ENCODE measurements at regions of chr22 and their contacts with region 1.

Region 1: DNA sequence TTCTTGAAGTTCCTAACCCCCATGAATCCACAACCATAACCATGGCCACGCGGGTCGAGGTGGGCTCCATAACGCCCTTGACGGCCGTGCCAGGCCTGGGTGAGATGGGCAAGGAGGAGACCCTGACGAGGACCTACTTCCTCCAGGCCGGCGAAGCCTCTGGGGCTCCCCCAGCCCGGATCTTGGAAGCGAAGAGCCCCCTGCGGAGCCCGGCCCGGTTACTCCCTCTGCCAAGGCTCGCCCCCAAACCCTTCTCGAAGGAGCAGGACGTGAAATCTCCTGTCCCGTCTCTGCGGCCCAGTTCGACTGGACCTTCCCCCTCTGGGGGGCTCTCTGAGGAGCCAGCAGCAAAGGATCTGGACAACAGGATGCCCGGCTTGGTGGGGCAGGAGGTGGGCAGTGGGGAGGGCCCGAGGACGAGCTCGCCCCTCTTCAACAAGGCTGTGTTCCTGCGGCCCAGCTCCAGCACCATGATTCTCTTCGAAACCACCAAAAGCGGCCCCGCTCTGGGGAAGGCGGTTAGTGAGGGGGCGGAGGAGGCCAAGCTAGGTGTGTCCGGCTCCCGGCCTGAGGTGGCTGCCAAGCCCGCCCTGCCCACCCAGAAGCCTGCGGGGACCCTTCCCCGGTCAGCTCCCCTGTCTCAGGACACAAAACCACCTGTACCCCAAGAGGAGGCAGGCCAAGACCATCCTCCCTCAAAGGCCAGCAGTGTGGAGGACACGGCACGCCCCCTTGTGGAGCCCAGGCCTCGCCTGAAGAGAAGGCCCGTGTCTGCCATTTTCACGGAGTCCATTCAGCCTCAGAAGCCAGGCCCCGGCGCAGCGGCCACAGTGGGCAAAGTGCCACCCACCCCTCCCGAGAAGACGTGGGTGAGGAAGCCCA is 75.7 kb downstream of the KIAA1671 start:
- DNase-seq: no peak
- ATAC-seq: peak; percentile 86
- H3K4me3 ChIP-seq: no peak overlapping the region
- H3K27ac ChIP-seq: peak overlapping the region; percentile 61
- H3K4me1 ChIP-seq: peaks cover 18% of the 10 kb centered on the region
- H3K27me3 ChIP-seq: no peaks in the 10 kb centered on the region
- CTCF ChIP-seq: peak; percentile 84

Region 2: DNA sequence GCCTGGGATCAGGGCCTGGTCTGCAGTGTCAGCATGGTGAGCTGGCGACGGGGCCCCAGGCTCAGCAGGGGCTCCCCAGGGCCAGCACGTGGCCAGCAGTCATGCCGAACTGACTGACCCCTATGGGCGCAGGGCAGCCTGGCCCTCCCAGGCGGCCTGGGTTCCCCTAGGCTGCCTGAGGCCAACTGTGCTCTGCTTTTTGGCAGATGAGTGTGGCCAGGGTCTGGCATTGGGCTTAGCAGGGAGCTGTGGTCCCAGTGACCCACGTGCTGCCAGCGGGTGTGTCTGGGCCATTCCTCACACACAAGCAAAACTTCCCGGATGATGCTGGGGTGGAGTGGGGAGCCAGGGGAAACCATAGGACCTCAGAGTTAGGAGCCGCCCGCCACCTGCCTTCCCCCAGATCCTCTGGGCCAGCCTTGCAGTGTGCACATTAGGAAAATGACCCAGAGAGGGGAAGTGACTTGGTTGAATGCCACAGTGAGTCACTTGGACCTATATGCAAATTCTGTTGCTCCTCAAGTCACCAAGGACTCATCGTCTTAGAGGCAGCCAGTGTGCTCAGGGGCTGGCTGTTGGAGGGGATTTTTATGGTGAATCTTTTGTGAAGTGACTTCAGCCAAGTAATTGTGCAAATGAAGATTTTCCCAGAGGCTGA is 594.3 kb before region 1 on chr22:
- CTCF ChIA-PET with region 1: no interaction called
- POLR2A ChIA-PET with region 1: no interaction called
- in situ Hi-C with region 1: no loop called
- intact Hi-C with region 1: no loop called
- DNase-seq: no peak
- ATAC-seq: peak; percentile 37; the same call in 1 of the 2 replicates
- H3K4me3 ChIP-seq: no peak overlapping the region
- H3K27ac ChIP-seq: no peak overlapping the region
- H3K4me1 ChIP-seq: peaks cover under 1% of the 10 kb centered on the region
- H3K27me3 ChIP-seq: no peaks in the 10 kb centered on the region
- CTCF ChIP-seq: no peak

Region 3: DNA sequence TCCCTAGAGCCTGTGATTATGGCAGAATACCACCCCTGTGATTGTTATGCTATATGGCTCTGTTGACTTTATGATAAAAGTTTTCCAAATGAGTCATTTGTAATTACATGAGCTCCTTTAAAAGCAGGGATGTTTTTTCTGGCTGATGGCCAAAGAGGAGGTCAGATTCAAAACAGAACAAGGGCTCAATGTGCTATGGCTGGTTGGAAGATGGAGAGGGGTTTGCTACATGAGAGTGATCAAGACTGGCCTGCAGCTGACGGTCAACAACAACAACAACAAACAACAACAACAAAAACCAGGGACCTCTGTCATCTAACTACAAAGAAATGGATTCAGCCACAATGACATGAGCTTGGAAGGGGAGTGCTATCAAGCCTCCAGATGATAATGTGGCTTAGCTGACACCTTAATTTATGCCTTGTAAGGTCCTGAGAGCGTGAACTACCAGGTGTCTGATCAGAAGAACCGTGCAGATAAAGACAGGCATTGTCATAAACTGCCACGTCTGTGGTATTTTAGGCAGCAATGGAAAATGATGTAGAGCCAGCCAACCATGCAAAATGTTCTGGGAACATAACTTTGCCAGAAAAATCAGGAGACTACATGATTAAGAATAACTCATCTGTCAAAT is 300.9 kb before region 1 on chr22:
- CTCF ChIA-PET with region 1: no interaction called
- POLR2A ChIA-PET with region 1: no interaction called
- in situ Hi-C with region 1: no loop called
- intact Hi-C with region 1: no loop called
- DNase-seq: peak; percentile 83
- ATAC-seq: peak; percentile 97
- H3K4me3 ChIP-seq: no peak overlapping the region
- H3K27ac ChIP-seq: no peak overlapping the region
- H3K4me1 ChIP-seq: peaks cover 23% of the 10 kb centered on the region
- H3K27me3 ChIP-seq: peaks cover 2% of the 10 kb centered on the region; the same call in 1 of the 2 replicates
- CTCF ChIP-seq: no peak

Region 4: GRCh38 chr22:24951942-24952836 is 76.0 kb before region 1 on chr22 and contains the start of gene KIAA1671:
- CTCF ChIA-PET with region 1: no interaction called
- POLR2A ChIA-PET with region 1: no interaction called
- in situ Hi-C with region 1: no loop called
- intact Hi-C with region 1: loop called (anchors 5 kb)
- DNase-seq: no peak
- ATAC-seq: peak; percentile 95
- H3K4me3 ChIP-seq: peak within 1 kb of the TSS; percentile 84 to 86
- H3K27ac ChIP-seq: peak within 1 kb of the TSS; percentile 92
- H3K4me1 ChIP-seq: peaks cover 8% of the 10 kb centered on the region
- H3K27me3 ChIP-seq: no peaks in the 10 kb centered on the region
- CTCF ChIP-seq: peak; percentile 96
- total RNA-seq, gene KIAA1671: 48.1 TPM

Measured in Panc1 (cell line).